Activated naive CD4-positive, alpha-beta T cell treated with anti-CD3 and anti-CD28 coated beads for 36 hours (primary cell): ENCODE measurements at regions of chrX and their contacts with region 1.

Region 1: DNA sequence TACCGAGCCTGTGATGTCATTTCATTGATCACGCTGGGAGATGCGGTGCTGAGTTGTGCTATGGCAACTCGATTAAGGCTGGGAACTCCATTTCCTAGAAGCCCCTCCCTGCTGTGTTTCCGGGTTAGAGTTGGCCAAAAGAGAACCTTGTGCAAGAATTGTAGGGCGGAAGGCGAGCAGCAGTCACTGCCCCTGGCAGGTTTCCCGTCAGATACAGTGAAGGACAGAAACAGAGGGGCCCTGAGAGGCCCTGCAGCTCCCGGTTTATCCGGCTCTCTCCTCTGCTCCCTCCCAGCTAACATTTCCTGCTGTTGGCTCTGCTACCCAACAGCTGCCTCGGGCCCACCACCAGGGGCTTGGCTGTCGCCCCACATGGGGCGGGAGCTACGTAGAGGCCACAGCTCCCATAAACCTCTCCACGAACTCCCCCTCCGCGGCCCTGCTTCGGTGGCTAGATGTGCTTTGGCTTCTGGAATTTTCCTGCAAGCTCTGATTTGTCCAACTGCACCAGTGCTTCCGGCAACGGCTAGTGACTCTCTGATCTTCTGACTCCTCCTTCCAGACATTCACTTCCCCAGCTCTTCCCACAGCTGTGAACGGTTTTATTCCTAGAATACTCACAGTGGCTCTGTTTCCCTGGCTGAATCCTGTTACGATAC is 74.9 kb upstream of the USP9X start:
- DNase-seq: peak; percentile 78
- H3K4me3 Mint-ChIP-seq: peak overlapping the region; percentile 54
- H3K27ac Mint-ChIP-seq: peak overlapping the region; percentile 77
- H3K4me1 Mint-ChIP-seq: peaks cover 29% of the 10 kb centered on the region
- H3K27me3 Mint-ChIP-seq: no peaks in the 10 kb centered on the region

Region 2: GRCh38 chrX:40040686-40041461 is 969.4 kb before region 1 on chrX:
- CTCF ChIA-PET with region 1: no interaction called
- intact Hi-C with region 1: no loop called
- DNase-seq: peak; percentile 25
- H3K4me3 Mint-ChIP-seq: no peak overlapping the region
- H3K27ac Mint-ChIP-seq: no peak overlapping the region
- H3K4me1 Mint-ChIP-seq: peaks cover 17% of the 10 kb centered on the region
- H3K27me3 Mint-ChIP-seq: no peaks in the 10 kb centered on the region

Region 3: GRCh38 chrX:40871385-40872082 is 138.8 kb before region 1 on chrX:
- CTCF ChIA-PET with region 1: no interaction called
- intact Hi-C with region 1: loop called (anchors 5 kb)
- DNase-seq: peak; percentile 72
- H3K4me3 Mint-ChIP-seq: no peak overlapping the region
- H3K27ac Mint-ChIP-seq: peak overlapping the region; percentile 88
- H3K4me1 Mint-ChIP-seq: peaks cover 12% of the 10 kb centered on the region
- H3K27me3 Mint-ChIP-seq: no peaks in the 10 kb centered on the region

Region 4: DNA sequence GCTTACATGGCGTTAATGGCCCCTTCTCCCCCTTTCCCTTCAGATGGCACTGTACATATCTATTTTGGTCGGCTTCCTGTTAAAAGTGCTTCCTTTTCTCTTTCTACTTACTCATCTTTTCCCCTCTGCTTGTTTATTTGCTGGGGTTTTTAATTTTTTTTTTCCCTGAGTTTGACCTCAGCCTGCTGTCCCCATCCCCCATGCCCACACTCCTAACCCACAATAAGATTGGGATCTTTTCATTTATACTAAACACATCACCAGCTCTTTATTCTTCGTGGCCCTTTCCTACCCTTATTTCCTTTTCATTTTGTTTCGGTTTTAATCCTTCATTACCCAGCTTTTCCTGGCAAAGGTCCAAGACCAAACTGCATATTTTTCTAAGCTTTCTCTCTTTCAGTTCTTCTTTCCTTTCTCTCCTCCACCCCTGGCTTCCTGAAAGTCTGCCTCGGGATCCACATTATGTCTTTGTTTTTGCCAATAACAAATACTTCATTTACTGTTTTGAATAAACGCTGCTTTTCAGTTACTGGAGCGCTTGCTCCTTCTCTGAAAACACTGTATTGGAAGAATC is 77.1 kb before region 1 on chrX:
- CTCF ChIA-PET with region 1: no interaction called
- intact Hi-C with region 1: loop called (anchors 1 kb)
- DNase-seq: peak; percentile 26
- H3K4me3 Mint-ChIP-seq: peak overlapping the region; percentile 48
- H3K27ac Mint-ChIP-seq: peak overlapping the region; percentile 87
- H3K4me1 Mint-ChIP-seq: peaks cover 22% of the 10 kb centered on the region
- H3K27me3 Mint-ChIP-seq: no peaks in the 10 kb centered on the region

Region 5: DNA sequence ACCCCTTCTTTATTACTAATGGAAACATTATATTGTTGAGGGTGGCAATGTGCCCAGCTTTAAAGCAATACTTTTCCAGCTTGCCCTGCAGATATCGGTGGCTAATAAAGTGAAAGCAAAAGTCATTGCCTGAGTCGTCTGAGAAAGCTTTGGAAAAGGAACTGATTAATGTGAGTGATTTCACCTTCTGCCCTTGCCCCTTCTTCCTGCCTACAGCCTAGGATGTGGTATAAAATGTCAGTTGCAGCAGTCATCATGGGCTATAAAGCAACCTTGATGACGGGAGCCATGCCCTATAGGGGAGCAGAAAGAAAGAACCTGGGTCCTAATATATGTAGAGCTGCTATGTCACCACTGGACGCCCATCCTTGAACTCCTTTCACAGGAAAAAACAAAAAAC is 57.5 kb before region 1 on chrX:
- CTCF ChIA-PET with region 1: no interaction called
- intact Hi-C with region 1: loop called (anchors 2 kb)
- DNase-seq: peak; percentile 33
- H3K4me3 Mint-ChIP-seq: peak overlapping the region; percentile 29
- H3K27ac Mint-ChIP-seq: no peak overlapping the region
- H3K4me1 Mint-ChIP-seq: peaks cover 11% of the 10 kb centered on the region
- H3K27me3 Mint-ChIP-seq: no peaks in the 10 kb centered on the region